ENCODE measurements at regions of chr19 and their contacts with region 1.

Region 1: GRCh38 chr19:38514812-38515633 is 81.5 kb downstream of the RYR1 start:
- DNase-seq: peak; percentile 79
- H3K27ac ChIP-seq: no peak overlapping the region
- CTCF ChIP-seq: peak; percentile 94

Region 2: DNA sequence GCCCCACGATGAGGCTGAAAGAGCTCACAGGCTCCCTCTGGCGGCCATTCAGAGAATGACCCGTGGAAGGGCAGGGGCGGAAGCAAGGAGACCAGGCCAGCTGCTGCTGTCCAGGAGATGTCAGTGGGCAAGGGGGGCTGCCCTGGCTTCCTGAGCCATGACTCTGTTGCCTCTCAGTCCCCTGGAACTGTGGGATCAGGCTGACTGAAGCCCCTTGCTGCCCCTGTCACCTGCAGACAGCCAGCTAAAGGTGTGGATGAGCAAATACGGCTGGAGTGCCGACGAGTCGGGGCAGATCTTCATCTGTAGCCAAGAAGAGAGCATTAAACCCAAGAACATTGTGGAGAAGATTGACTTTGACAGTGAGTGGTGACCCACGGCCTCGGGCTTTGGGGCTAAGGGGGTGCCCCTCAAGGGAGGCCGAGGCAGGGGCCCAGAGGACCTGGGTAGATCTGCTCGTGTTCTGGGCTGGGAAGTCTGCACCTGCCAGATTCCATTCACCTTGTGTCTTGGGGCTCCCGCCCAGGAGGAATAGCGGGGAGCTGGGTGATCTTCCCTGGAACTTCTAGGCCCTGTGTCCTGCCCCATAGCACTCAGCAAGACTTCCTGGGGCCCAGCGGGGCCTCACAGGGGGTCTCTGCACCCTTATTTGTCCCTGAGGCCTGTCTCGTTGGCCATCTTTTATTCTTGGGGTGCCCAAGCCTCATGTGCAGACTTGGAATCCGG is 119.9 kb after region 1 on chr19:
- CTCF ChIA-PET with region 1: interaction called, 11 read pairs
- POLR2A ChIA-PET with region 1: no interaction called
- DNase-seq: peak; percentile 72
- H3K27ac ChIP-seq: peak overlapping the region; percentile 84
- CTCF ChIP-seq: peak; percentile 92